Psoas muscle (tissue), 8 donors: ENCODE measurements at regions of chr2 and their contacts with region 1.

Region 1: GRCh38 chr2:38315707-38316333 is 61.3 kb downstream of the ATL2 start:
- DNase-seq: no peak
- ATAC-seq: peak; percentile 59 to 88 (median 77)
- H3K4me3 ChIP-seq: no peak overlapping the region
- H3K27ac ChIP-seq: no peak overlapping the region
- H3K4me1 ChIP-seq: peaks cover 8% of the 10 kb centered on the region
- H3K27me3 ChIP-seq: no peaks in the 10 kb centered on the region
- CTCF ChIP-seq: peak; percentile 76

Region 2: DNA sequence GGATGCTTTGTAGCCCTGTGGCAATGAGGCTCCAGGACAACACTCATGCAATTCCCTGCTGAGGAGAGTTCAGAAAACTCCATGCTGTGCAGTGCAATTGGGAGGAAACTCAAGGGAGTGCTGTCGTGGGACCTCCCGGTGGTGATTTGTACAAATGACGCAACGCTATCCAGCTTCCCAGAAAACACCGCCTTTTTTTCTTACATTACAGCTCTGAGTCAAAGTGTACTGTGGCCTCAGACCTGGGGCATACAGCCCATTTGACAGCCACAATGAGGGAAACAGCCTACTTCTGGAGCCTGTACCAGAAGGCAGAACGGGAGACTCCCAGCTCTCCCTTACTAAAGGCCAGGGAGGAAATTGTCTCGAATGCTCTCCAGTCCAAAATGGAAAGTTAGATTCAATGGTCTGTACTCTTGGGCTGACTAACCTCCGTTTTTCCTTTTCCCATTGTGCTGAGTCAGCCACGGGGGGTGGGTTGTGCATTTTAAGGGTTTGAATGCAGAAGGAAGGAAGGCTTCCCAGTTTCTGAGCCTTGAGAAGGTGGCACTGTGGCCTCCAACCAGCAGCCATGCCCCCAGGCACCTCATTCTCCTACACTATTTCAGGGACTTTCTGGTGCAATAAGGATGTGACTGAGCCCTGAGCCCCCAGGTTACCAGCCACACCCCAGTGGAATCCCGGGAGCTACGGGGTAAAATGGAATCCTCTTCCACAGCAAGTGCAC is 223.5 kb before region 1 on chr2:
- intact Hi-C with region 1: no loop called
- DNase-seq: peak; percentile 65 to 82
- ATAC-seq: peak; percentile 58 to 83 (median 69)
- H3K4me3 ChIP-seq: no peak overlapping the region
- H3K27ac ChIP-seq: peak overlapping the region; percentile 68
- H3K4me1 ChIP-seq: no peaks in the 10 kb centered on the region
- H3K27me3 ChIP-seq: peaks cover 0 to 12% (median 2%) of the 10 kb centered on the region in 3 donors
- CTCF ChIP-seq: no peak

Region 3: DNA sequence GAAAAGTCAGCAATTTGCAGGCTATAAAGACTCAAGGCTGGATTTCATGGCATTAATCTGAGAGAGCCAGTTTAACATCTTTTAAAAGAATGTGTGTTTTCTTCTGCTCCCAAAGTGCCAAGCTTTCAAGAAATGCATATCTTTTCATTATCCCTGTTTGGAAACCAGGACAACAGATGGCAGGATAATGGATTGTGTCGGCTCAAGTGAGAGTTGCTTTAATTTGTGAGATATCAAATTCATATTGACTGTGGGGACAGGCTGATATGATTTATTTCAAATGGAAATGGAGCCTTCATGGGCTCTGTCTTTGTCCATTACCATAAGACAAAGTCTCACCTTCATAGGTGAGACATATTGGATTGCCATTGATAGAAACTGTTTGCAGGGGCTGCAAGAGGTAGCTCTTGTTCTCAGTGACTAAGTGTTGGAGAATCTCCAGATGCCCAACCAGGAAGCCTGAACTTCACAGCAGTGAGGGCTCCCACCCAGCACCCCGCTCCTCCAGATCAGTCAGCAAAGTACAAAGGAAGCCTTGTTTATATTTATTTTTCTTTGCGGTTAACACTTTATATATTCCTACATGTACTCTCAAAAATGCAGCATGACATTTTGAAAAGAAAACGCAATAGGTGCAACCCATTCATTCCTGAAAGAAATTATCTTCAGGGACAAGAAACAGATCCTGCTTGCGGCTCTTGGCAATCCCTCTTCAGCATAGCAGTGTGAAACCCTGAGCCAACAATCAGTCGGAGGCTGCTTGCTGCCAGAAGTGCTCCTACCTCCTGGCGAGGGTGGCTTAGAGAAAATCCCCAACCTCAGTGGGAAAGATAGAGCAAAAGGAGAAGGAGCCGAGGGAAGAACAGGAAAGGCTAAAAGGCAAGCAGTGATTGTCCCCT is 127.1 kb after region 1 on chr2:
- intact Hi-C with region 1: loop called in 1 of 2 experiments (anchors 10 kb)
- DNase-seq: no peak
- ATAC-seq: peak in 3 of 4 donors; percentile 57 to 70 (median 66)
- H3K4me3 ChIP-seq: no peak overlapping the region
- H3K27ac ChIP-seq: no peak overlapping the region
- H3K4me1 ChIP-seq: peaks cover 10% of the 10 kb centered on the region
- H3K27me3 ChIP-seq: no peaks in the 10 kb centered on the region
- CTCF ChIP-seq: no peak

Region 4: GRCh38 chr2:38474715-38475566 is 159.1 kb after region 1 on chr2:
- intact Hi-C with region 1: loop called in 1 of 2 experiments (anchors 5 kb)
- DNase-seq: no peak
- ATAC-seq: peak; percentile 53 to 79 (median 63)
- H3K4me3 ChIP-seq: no peak overlapping the region
- H3K27ac ChIP-seq: peak overlapping the region; percentile 63
- H3K4me1 ChIP-seq: peaks cover 19% of the 10 kb centered on the region
- H3K27me3 ChIP-seq: no peaks in the 10 kb centered on the region
- CTCF ChIP-seq: no peak

Region 5: GRCh38 chr2:38535744-38536506 is 220.1 kb after region 1 on chr2:
- intact Hi-C with region 1: loop called in 1 of 2 experiments (anchors 10 kb)
- DNase-seq: peak; percentile 87 to 91
- ATAC-seq: peak; percentile 95 to 98 (median 97)
- H3K4me3 ChIP-seq: peak overlapping the region; percentile 70
- H3K27ac ChIP-seq: peak overlapping the region; percentile 25
- H3K4me1 ChIP-seq: peaks cover 4% of the 10 kb centered on the region
- H3K27me3 ChIP-seq: no peaks in the 10 kb centered on the region
- CTCF ChIP-seq: peak; percentile 91

Region 6: DNA sequence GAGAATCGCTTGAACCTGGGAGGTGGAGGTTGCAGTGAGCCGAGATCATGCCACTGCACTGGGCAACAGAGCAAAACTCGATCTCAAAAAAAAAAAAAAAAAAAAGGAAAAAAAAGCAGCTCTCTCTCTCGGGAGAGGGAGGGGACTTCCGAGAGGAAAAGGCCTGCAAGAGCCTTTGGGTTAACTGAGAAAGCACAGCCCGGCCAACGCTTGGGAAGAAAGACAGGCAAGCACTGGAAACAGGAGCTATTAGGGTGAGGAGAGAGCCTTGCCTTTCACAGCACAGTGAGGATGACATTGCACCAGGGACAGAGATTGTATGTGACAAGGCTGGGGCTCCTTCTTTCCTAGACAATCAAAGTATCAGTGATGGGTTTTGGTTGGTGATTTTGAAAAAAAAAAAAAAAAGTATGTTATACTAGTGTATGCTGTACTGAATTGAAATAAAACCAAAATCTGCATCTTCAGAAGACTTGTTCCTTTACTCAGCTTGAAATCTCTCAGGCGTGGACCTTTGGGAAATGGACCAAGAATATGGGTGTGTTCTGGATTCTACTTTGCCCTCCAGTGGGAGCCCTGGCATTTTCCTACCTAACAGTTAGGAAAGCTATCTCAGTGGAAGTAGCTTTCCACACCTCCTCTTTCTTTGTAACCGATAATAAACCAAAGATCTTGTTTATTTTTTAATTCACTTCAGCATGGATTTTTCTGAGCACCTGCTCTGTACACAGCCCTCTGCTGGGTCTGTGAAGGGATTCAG is 418.7 kb after region 1 on chr2:
- intact Hi-C with region 1: loop called in 1 of 2 experiments (anchors 5 kb)
- DNase-seq: no peak
- ATAC-seq: no peak
- H3K4me3 ChIP-seq: no peak overlapping the region
- H3K27ac ChIP-seq: no peak overlapping the region
- H3K4me1 ChIP-seq: no peaks in the 10 kb centered on the region
- H3K27me3 ChIP-seq: no peaks in the 10 kb centered on the region
- CTCF ChIP-seq: no peak

Region 7: GRCh38 chr2:38740851-38741731 is 425.3 kb after region 1 on chr2:
- intact Hi-C with region 1: loop called in 1 of 2 experiments (anchors 5 kb)
- DNase-seq: peak in 1 of 2 donors; percentile 32
- ATAC-seq: peak; percentile 24 to 49 (median 32)
- H3K4me3 ChIP-seq: no peak overlapping the region
- H3K27ac ChIP-seq: no peak overlapping the region
- H3K4me1 ChIP-seq: peaks cover 21% of the 10 kb centered on the region
- H3K27me3 ChIP-seq: no peaks in the 10 kb centered on the region
- CTCF ChIP-seq: peak; percentile 72